Activated naive CD4-positive, alpha-beta T cell treated with anti-CD3 and anti-CD28 coated beads for 36 hours (primary cell): ENCODE measurements at regions of chr12 and their contacts with region 1.

Region 1: GRCh38 chr12:131104463-131105350 is 151.0 kb downstream of the ADGRD1 start:
- DNase-seq: peak; percentile 88
- H3K4me3 Mint-ChIP-seq: no peak overlapping the region
- H3K27ac Mint-ChIP-seq: no peak overlapping the region
- H3K4me1 Mint-ChIP-seq: peaks cover 14% of the 10 kb centered on the region
- H3K27me3 Mint-ChIP-seq: no peaks in the 10 kb centered on the region

Region 2: GRCh38 chr12:131092901-131093603 is 11.7 kb before region 1 on chr12:
- CTCF ChIA-PET with region 1: interaction called, 11 read pairs
- intact Hi-C with region 1: no loop called
- DNase-seq: no peak
- H3K4me3 Mint-ChIP-seq: no peak overlapping the region
- H3K27ac Mint-ChIP-seq: no peak overlapping the region
- H3K4me1 Mint-ChIP-seq: peaks cover 8% of the 10 kb centered on the region
- H3K27me3 Mint-ChIP-seq: no peaks in the 10 kb centered on the region

Region 3: DNA sequence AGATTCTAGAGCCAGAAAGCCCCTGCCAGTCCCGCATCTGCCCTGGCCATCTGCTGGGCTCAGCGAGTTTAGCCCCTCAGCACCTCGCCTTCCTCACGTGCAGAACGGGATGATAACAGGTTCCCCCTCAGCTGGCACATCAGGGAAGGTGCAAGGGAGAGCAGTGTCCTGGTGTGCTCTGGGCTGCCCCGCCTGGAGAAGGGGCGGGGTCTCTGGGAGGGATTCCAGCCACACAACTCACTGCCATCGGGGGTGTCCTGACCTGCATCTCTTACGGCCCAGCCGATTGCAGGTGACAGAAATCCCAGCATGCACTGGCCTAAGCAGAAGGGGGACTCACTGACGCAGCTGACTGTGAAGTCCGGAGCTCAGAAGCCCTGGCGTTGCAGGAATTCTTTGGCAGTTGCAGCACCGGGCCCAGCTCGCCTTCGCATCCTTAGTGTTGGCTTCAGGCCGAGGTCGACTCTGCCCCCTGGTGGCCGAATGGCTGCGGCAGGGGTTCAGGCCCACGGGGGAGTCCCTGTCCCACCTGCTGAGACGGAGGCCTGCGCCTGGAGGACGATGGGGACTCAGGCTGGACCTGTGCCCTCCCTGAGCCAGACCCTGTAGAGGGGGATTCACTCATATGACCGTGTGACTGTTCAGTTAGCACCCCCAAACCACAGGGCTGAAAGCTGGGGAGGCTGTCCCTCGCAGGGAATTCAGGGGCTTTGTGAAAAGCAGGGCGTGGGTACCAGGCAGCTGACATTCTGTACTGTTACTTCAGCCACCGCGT is 27.6 kb after region 1 on chr12:
- CTCF ChIA-PET with region 1: interaction called, 95 read pairs
- intact Hi-C with region 1: loop called (anchors 1 kb)
- DNase-seq: peak; percentile 80
- H3K4me3 Mint-ChIP-seq: no peak overlapping the region
- H3K27ac Mint-ChIP-seq: no peak overlapping the region
- H3K4me1 Mint-ChIP-seq: no peaks in the 10 kb centered on the region
- H3K27me3 Mint-ChIP-seq: no peaks in the 10 kb centered on the region

Region 4: DNA sequence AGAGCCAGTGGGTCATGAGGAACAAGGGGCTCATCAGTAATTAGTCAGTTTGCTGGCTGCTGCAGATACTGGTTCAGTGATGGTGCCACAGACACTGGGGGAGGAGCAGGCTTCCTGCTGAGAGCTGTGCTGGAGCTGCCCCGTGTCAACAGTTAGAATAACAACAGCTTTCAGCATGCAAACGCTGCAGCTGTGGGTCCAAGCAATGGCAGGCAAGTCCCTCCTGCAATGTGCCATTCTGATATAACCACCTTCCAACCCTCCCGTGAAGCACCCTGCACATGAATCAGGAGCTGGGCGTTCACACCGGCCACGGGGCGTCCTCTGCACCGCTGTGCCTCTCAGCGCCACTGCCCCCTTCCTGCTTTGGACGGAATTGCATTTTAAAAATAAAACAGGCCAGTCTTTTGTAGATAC is 347.7 kb after region 1 on chr12:
- CTCF ChIA-PET with region 1: interaction called, 9 read pairs
- intact Hi-C with region 1: loop called (anchors 2 kb)
- DNase-seq: peak; percentile 60
- H3K4me3 Mint-ChIP-seq: no peak overlapping the region
- H3K27ac Mint-ChIP-seq: no peak overlapping the region
- H3K4me1 Mint-ChIP-seq: no peaks in the 10 kb centered on the region
- H3K27me3 Mint-ChIP-seq: peaks cover 10% of the 10 kb centered on the region

Region 5: GRCh38 chr12:131830335-131830913 is 725.7 kb after region 1 on chr12:
- CTCF ChIA-PET with region 1: interaction called, 3 read pairs
- intact Hi-C with region 1: loop called (anchors 2 kb)
- DNase-seq: peak; percentile 65
- H3K4me3 Mint-ChIP-seq: peak overlapping the region; percentile 43
- H3K27ac Mint-ChIP-seq: no peak overlapping the region
- H3K4me1 Mint-ChIP-seq: peaks cover 14% of the 10 kb centered on the region
- H3K27me3 Mint-ChIP-seq: peaks cover 44% of the 10 kb centered on the region